ENCODE measurements at regions of chr3 and their contacts with region 1.

Region 1: GRCh38 chr3:37163262-37164015 is 10.9 kb downstream of the LRRFIP2 start:
- DNase-seq: peak; percentile 69
- ATAC-seq: peak; percentile 77
- H3K4me3 Mint-ChIP-seq: no peak overlapping the region
- H3K27ac Mint-ChIP-seq: peak overlapping the region; percentile 82
- H3K4me1 Mint-ChIP-seq: peaks cover 32% of the 10 kb centered on the region
- H3K27me3 Mint-ChIP-seq: no peaks in the 10 kb centered on the region

Region 2: DNA sequence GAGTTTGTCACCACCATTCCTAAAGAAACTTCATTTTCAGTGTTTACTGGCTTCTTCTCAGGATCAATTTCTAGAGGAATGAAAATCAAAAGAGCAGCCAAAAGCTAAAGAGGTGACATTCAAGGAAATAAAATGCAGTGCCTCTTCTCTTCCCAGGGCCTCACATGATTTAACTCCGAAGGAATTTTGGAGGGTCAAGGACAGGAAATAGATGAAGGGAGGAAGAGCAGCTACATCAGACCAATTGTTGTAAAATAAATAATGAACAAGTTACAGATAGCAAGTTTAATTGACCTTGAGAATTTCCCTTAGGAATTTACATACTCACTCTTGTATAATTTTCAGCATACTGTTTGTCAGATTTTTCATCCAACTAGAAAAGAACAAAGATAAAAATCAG is 67.2 kb before region 1 on chr3:
- CTCF ChIA-PET with region 1: no interaction called
- POLR2A ChIA-PET with region 1: no interaction called
- intact Hi-C with region 1: no loop called
- DNase-seq: no peak
- ATAC-seq: no peak
- H3K4me3 Mint-ChIP-seq: no peak overlapping the region
- H3K27ac Mint-ChIP-seq: no peak overlapping the region
- H3K4me1 Mint-ChIP-seq: no peaks in the 10 kb centered on the region
- H3K27me3 Mint-ChIP-seq: no peaks in the 10 kb centered on the region

Region 3: GRCh38 chr3:37114251-37115145 is 48.9 kb before region 1 on chr3:
- CTCF ChIA-PET with region 1: interaction called, 4 read pairs
- POLR2A ChIA-PET with region 1: no interaction called
- intact Hi-C with region 1: loop called (anchors 2 to 5 kb)
- DNase-seq: no peak
- ATAC-seq: peak; percentile 79
- H3K4me3 Mint-ChIP-seq: no peak overlapping the region
- H3K27ac Mint-ChIP-seq: no peak overlapping the region
- H3K4me1 Mint-ChIP-seq: peaks cover 19% of the 10 kb centered on the region
- H3K27me3 Mint-ChIP-seq: no peaks in the 10 kb centered on the region

Region 4: DNA sequence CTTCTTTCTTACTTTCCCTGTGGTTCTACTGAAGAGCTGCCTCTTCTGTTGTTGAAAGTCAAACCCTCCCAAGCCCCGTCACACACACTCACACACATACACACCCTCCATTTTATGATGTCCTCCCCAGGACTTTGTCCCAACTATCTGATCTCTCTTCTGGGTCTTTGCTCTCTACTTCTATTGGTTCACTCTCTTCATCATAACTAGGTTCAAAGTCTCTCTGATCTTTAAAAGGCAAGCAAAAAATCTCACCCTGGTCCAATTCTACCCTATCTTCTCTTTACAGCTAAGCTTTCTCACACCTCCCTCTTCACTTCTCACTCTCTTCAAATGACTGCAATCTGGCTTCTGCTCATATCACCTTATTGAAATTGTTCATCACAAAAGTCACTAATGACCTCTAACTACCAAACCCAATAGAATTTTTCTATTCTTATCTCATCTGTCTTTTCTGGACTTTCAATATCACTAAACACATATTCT is 23.8 kb before region 1 on chr3:
- CTCF ChIA-PET with region 1: no interaction called
- POLR2A ChIA-PET with region 1: no interaction called
- intact Hi-C with region 1: loop called in 1 of 2 experiments (anchors 1 kb)
- DNase-seq: no peak
- ATAC-seq: peak; percentile 91
- H3K4me3 Mint-ChIP-seq: no peak overlapping the region
- H3K27ac Mint-ChIP-seq: no peak overlapping the region
- H3K4me1 Mint-ChIP-seq: peaks cover 10% of the 10 kb centered on the region
- H3K27me3 Mint-ChIP-seq: no peaks in the 10 kb centered on the region

Region 5: DNA sequence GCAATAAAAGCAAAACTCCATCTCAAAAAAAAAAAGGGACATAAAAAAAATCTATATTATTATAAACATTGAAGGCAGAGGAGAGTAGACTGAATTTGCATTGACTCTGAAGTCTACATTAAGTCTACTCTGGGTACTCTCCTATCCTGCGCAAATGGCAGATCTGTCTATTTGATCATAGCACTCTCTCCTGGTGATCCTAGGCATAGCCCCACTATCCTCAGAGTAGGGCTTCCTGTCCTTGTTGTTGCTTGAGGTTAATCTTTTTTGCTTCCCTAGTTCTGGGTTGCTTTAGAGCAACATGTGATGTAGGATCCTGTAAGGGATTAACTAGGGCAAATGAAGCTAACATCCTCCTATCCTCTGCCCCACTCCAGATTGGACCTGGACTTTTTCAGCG is 93.0 kb after region 1 on chr3:
- CTCF ChIA-PET with region 1: no interaction called
- POLR2A ChIA-PET with region 1: no interaction called
- intact Hi-C with region 1: no loop called
- DNase-seq: no peak
- ATAC-seq: peak; percentile 57
- H3K4me3 Mint-ChIP-seq: no peak overlapping the region
- H3K27ac Mint-ChIP-seq: no peak overlapping the region
- H3K4me1 Mint-ChIP-seq: peaks cover 25% of the 10 kb centered on the region
- H3K27me3 Mint-ChIP-seq: no peaks in the 10 kb centered on the region

Measured in activated CD4-positive, alpha-beta T cell treated with anti-CD3 and anti-CD28 coated beads for 36 hours (primary cell).